ENCODE measurements at regions of chr12 and their contacts with region 1.

Region 1: DNA sequence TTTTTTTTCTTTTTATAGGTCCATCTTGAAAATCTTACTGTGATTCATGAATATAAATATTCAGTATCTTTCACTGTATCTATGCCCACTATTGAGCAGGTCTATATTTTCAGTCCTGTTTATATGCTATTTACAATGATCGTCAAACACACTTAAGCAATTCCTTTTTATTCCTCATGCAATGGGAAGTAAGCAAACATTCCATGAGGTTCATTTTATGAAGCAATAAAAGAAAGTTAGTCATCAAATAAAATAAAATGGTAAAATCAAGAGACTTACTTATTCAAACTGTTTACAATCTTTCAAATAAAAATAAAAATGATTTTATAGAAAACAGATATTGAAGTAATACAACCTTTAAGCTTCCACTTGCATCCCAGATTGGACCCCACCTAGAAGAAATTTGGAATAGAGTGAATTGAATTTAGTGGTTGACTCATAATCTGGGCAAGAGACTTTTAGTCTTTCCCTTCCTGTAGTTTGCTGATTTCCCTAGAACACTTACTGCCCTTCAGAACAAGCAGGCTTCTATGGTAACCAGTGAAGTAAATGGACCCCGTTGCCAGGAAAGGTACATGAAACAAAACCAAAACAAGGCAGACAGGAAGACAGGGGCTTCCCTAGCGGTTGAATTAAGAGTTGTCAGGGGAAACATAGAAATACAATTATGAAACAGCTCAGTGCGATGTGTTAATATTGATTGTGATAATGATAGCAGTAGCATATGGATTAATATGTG is 241.0 kb upstream of the ATP2B1 start:
- DNase-seq: peak; percentile 70
- ATAC-seq: peak; percentile 91
- H3K4me3 Mint-ChIP-seq: peak overlapping the region; percentile 34
- H3K27ac Mint-ChIP-seq: peak overlapping the region; percentile 60
- H3K4me1 Mint-ChIP-seq: peaks cover 43% of the 10 kb centered on the region
- H3K27me3 Mint-ChIP-seq: no peaks in the 10 kb centered on the region
- CTCF ChIP-seq: peak; percentile 15

Region 2: DNA sequence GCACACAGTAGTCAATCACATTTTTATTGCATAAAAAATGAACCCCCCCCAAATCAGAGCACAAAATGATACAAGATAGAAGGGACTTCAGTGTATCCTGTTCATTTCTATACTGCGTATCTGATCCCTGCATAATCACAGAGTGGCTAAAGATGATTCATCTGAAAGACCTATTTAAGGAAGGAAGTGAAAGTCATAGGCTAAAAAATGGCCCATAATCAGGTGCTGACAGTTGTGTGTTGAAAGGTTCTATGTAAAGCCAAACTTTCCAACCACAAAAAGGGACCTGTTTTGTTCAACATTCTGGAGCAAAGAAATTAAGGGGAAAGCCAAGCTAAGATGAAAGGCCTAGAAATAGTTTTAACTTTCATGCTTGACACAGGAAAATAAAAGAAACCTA is 93.2 kb before region 1 on chr12:
- CTCF ChIA-PET with region 1: interaction called, 3 read pairs
- POLR2A ChIA-PET with region 1: no interaction called
- intact Hi-C with region 1: loop called (anchors 5 kb)
- DNase-seq: peak; percentile 13
- ATAC-seq: peak; percentile 93
- H3K4me3 Mint-ChIP-seq: no peak overlapping the region
- H3K27ac Mint-ChIP-seq: peak overlapping the region; percentile 58
- H3K4me1 Mint-ChIP-seq: peaks cover 48% of the 10 kb centered on the region
- H3K27me3 Mint-ChIP-seq: no peaks in the 10 kb centered on the region
- CTCF ChIP-seq: no peak

Region 3: GRCh38 chr12:89875225-89875624 is 74.4 kb before region 1 on chr12:
- CTCF ChIA-PET with region 1: no interaction called
- POLR2A ChIA-PET with region 1: no interaction called
- intact Hi-C with region 1: loop called (anchors 5 kb)
- DNase-seq: no peak
- ATAC-seq: no peak
- H3K4me3 Mint-ChIP-seq: no peak overlapping the region
- H3K27ac Mint-ChIP-seq: no peak overlapping the region
- H3K4me1 Mint-ChIP-seq: peaks cover 17% of the 10 kb centered on the region
- H3K27me3 Mint-ChIP-seq: no peaks in the 10 kb centered on the region
- CTCF ChIP-seq: no peak

Measured in activated CD8-positive, alpha-beta T cell treated with anti-CD3 and anti-CD28 coated beads for 36 hours (primary cell).